Naive thymus-derived CD4-positive, alpha-beta T cell (primary cell): ENCODE measurements at regions of chr19 and their contacts with region 1.

Region 1: DNA sequence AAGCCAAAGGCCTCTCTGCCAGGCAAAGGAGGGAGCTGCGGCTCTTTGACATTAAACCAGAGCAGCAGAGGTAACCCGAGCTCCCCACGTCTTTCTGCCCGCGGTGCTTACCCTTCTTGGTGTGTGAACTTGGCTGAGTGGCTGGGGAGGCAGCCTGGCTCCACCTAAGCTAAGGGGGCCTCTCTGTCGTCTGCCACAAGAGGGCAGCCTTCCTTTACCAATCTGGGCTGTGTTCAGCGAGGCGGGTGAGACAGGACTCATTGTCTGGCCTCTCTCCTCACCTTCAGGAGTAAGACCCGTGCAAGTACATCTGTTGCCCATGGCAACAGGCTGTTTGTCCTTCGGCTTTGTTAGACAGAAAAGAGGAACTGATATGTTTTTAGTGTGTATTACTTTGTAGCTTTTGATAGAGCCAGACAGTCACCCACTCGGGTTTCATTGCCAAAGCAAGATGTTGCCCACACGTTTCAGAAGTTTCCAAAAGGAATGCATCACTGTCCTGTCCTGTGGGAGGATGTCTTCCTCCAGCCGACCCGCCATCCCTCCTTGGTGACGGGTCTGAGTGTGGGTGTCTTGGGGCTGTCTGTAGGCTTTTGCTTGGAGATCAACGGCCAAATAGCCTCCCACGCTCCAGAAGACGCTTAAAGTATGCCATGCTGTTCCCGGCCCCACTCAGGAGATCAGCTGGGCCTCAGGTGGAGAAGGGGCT is 4.6 kb downstream of the POP4 start:
- DNase-seq: peak; percentile 61 to 85 (median 79)
- ATAC-seq: peak; percentile 82
- H3K4me3 ChIP-seq: no peak overlapping the region
- H3K4me3 Mint-ChIP-seq: peak overlapping the region in 1 of 10 donors; percentile 10
- H3K27ac ChIP-seq: peak overlapping the region; percentile 35
- H3K27ac Mint-ChIP-seq: peak overlapping the region in 8 of 9 donors; percentile 6 to 77 (median 44)
- H3K4me1 ChIP-seq: peaks cover 14 to 16% of the 10 kb centered on the region in 2 donors
- H3K4me1 Mint-ChIP-seq: peaks cover 16 to 39% (median 29%) of the 10 kb centered on the region in 7 donors
- H3K27me3 ChIP-seq: no peaks in the 10 kb centered on the region
- H3K27me3 Mint-ChIP-seq: peaks cover 0 to 4% (median 0%) of the 10 kb centered on the region in 5 donors

Region 2: GRCh38 chr19:27793644-27794493 is 1816.8 kb before region 1 on chr19:
- CTCF ChIA-PET with region 1: no interaction called
- POLR2A ChIA-PET with region 1: interaction called, 12 read pairs
- intact Hi-C with region 1: loop called in 1 of 2 experiments (anchors 10 kb)
- DNase-seq: peak; percentile 79 to 92 (median 91)
- ATAC-seq: peak; percentile 98
- H3K4me3 ChIP-seq: peak overlapping the region; percentile 92
- H3K4me3 Mint-ChIP-seq: peak overlapping the region; percentile 89 to 99 (median 94)
- H3K27ac ChIP-seq: peak overlapping the region; percentile 75
- H3K27ac Mint-ChIP-seq: peak overlapping the region; percentile 89 to 96 (median 93)
- H3K4me1 ChIP-seq: peaks cover 15 to 18% of the 10 kb centered on the region in 2 donors
- H3K4me1 Mint-ChIP-seq: peaks cover 12 to 48% (median 32%) of the 10 kb centered on the region in 7 donors
- H3K27me3 ChIP-seq: no peaks in the 10 kb centered on the region
- H3K27me3 Mint-ChIP-seq: no peaks in the 10 kb centered on the region

Region 3: DNA sequence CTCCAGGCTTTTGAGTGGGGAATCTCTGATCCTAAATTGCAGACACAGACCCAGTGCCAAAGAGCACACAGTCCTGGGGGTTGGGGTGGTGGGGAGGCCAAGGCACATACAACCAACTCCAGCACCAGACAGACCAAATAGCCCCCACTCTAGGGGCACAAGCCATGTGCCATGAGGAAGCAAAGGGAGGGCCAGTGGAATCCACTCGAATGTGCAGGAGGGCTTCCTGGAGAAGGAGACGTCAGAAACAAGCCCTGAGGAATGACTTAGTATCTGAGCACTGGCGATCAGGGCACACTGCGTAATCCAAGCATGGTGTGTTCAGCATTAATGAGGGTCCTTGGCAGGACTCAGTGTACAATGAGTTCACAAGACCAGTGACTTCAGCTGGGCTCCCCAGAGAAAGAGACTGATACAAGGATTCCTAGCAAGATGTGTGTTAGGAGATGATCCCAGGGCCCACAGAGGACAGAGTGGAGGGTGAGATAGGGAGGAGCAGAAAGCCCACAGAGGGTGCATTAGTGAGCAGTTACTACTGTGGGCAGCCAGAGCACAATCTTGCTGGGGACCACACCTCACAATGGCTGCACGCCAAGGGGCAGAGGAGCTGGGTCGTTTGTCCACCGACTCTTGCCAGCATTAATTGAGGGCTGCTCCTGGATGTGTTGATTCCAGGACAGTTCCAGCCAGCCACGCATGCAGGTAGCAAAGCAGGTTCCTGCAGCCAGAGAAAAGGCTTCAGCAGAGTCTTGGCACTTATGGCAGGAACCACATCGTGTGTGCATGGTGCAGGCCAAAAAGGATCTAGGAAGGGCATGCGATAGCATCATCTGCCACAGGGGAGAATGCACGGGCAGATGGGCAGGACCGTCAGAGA is 237.6 kb before region 1 on chr19:
- CTCF ChIA-PET with region 1: no interaction called
- POLR2A ChIA-PET with region 1: no interaction called
- intact Hi-C with region 1: no loop called
- DNase-seq: no peak
- ATAC-seq: no peak
- H3K4me3 ChIP-seq: no peak overlapping the region
- H3K4me3 Mint-ChIP-seq: no peak overlapping the region
- H3K27ac ChIP-seq: no peak overlapping the region
- H3K27ac Mint-ChIP-seq: no peak overlapping the region
- H3K4me1 ChIP-seq: no peaks in the 10 kb centered on the region
- H3K4me1 Mint-ChIP-seq: no peaks in the 10 kb centered on the region
- H3K27me3 ChIP-seq: no peaks in the 10 kb centered on the region
- H3K27me3 Mint-ChIP-seq: peaks cover 0 to 54% (median 27%) of the 10 kb centered on the region in 5 donors

Region 4: DNA sequence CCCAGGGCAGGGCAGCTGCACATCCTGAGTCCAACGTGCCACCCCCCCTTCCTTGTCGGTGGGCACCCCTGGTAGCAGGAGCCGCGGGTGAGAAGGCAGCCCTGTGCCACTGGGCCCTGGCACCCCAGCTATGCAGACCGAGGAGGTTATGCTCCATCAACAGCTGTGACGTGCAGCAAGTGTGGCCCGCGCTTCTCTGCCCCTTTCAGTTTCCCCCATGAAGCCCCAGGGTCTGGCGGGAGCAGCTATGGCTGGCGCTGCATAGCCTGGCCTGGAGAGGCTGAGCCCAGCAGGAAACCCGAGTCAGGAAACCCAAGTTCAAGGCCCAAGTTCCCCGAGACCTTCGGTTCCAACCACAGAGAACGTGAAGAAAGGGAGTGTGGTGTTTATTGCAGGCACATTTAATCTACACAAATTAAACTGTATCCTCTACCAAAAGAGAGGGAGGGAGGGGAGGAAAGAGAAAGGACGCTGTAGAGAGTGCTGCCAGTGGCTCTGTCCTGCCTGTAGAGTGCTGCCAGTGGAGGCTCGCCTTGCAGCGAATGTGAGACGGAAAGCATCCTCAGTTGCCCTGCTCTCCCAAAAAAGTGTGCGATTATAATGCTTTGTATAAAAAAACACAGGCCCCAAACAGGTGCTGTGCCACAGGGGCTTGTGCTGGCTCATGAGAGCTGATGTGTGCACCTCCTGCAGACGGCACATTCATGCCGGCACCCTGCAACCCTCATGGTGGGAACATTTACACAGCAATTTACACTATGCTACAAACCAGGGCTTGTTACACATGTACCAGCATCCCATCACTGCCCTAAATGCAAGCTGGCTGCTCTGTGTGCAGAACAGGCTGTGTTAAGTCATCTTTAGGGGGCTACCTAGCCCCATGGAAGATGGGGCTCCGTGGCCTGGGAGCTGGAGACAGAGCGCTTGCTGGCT is 11.7 kb after region 1 on chr19:
- CTCF ChIA-PET with region 1: interaction called, 26 read pairs
- POLR2A ChIA-PET with region 1: interaction called, 27 read pairs
- intact Hi-C with region 1: no loop called
- DNase-seq: peak in 6 of 9 donors; percentile 4 to 32 (median 25)
- ATAC-seq: peak; percentile 70
- H3K4me3 ChIP-seq: peak overlapping the region; percentile 21
- H3K4me3 Mint-ChIP-seq: peak overlapping the region; percentile 1 to 85 (median 70)
- H3K27ac ChIP-seq: no peak overlapping the region
- H3K27ac Mint-ChIP-seq: peak overlapping the region; percentile 13 to 87 (median 76)
- H3K4me1 ChIP-seq: peaks cover 28 to 58% of the 10 kb centered on the region in 2 donors
- H3K4me1 Mint-ChIP-seq: peaks cover 37 to 53% (median 45%) of the 10 kb centered on the region in 7 donors
- H3K27me3 ChIP-seq: no peaks in the 10 kb centered on the region
- H3K27me3 Mint-ChIP-seq: peaks cover 0 to 3% (median 0%) of the 10 kb centered on the region in 5 donors

Region 5: GRCh38 chr19:29680447-29680846 is 69.7 kb after region 1 on chr19:
- CTCF ChIA-PET with region 1: interaction called, 10 read pairs
- POLR2A ChIA-PET with region 1: interaction called, 21 read pairs
- intact Hi-C with region 1: no loop called
- DNase-seq: peak; percentile 55 to 83 (median 78)
- ATAC-seq: peak; percentile 93
- H3K4me3 ChIP-seq: peak overlapping the region; percentile 56
- H3K4me3 Mint-ChIP-seq: peak overlapping the region; percentile 62 to 85 (median 77)
- H3K27ac ChIP-seq: peak overlapping the region; percentile 67
- H3K27ac Mint-ChIP-seq: peak overlapping the region; percentile 84 to 93 (median 91)
- H3K4me1 ChIP-seq: peaks cover 69 to 73% of the 10 kb centered on the region in 2 donors
- H3K4me1 Mint-ChIP-seq: peaks cover 41 to 89% (median 60%) of the 10 kb centered on the region in 7 donors
- H3K27me3 ChIP-seq: no peaks in the 10 kb centered on the region
- H3K27me3 Mint-ChIP-seq: no peaks in the 10 kb centered on the region

Region 6: DNA sequence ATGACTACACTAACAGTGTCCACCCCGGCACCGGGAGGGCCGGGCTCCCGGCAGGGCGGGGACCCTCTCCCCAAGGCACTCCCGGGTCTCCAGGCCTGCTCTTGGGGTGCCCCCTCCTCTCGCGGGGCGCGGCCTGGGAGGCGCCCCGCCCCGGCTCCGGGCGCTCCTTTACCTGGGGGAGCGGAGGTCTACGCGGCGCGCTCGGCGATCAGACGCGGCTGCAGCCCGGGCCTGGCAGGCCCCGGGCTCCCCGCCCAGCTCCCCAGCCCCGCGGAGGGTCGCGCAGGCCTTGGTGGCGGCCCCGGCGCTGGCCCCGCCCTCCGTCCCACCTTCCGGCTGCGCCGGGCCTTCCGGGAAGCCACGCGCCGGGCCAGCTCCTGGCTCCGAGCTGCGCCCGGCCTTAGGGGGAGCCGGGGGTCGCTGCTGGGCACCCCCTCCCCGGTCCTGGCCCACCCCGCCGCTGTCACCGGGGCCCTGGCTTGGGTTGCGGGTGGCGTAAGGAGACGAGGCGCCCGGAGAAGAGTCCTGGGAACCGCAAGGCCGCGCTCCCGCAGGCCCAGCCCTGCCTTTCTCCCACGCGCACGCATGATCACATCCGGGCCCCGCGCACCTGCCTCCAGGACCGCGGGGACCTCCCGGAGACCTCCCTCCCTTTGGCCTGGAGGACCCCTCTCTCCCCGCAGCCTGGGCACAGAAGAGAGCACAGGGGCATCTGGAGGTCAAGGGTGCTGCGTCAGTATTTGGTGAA is 104.4 kb after region 1 on chr19 and contains the start of gene C19orf12:
- CTCF ChIA-PET with region 1: interaction called, 97 read pairs
- POLR2A ChIA-PET with region 1: interaction called, 198 read pairs
- intact Hi-C with region 1: loop called (anchors 1 kb)
- DNase-seq: peak in 7 of 9 donors; percentile 35 to 84 (median 81)
- ATAC-seq: peak; percentile 71
- H3K4me3 ChIP-seq: peak within 1 kb of the TSS; percentile 95
- H3K4me3 Mint-ChIP-seq: peak within 1 kb of the TSS; percentile 86 to 93 (median 92)
- H3K27ac ChIP-seq: peak within 1 kb of the TSS; percentile 97
- H3K27ac Mint-ChIP-seq: peak within 1 kb of the TSS; percentile 88 to 99 (median 96)
- H3K4me1 ChIP-seq: peaks cover 50 to 59% of the 10 kb centered on the region in 2 donors
- H3K4me1 Mint-ChIP-seq: peaks cover 48 to 61% (median 59%) of the 10 kb centered on the region in 7 donors
- H3K27me3 ChIP-seq: no peaks in the 10 kb centered on the region
- H3K27me3 Mint-ChIP-seq: no peaks in the 10 kb centered on the region
- total RNA-seq, gene C19orf12: 19.8 to 51.5 (median 24.6) TPM

Region 7: DNA sequence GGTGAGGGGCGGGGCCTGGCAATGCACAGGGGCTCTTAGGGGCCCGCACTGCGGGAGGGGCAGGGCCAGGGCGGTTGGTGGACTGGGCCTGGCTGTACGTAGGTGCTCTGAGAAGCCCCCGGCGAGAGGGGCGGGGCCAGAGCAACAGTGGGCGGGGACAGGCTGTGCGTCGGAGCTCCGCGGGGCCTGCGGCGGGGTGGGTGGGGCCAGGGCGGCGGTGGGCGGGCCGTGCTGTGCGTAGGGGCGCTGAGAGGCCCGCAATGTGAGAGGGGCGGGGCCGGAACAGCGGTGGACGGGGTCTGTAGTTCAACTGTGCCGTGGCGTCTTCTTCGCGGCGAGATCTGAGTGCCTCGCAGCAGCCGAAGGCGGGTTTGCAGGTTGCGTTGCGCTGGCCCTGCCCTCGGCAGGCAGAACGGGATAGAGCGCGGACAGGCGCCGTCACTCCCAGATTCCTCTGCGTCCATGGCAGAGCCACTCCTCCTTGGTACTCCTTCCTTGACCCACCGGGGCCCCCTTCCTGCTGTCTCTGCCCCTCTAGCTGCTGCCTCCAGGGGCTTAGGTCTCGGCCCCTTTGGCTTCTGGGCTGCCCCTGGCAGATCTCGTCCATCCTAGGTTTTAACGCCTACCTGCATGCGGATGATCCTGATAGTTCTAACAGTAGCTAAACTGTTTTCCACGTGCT is 234.3 kb after region 1 on chr19:
- CTCF ChIA-PET with region 1: no interaction called
- POLR2A ChIA-PET with region 1: interaction called, 18 read pairs
- intact Hi-C with region 1: loop called (anchors 1 kb)
- DNase-seq: peak; percentile 94 to 99 (median 96)
- ATAC-seq: peak; percentile 86
- H3K4me3 ChIP-seq: peak overlapping the region; percentile 97
- H3K4me3 Mint-ChIP-seq: peak overlapping the region; percentile 87 to 98 (median 92)
- H3K27ac ChIP-seq: peak overlapping the region; percentile 92
- H3K27ac Mint-ChIP-seq: peak overlapping the region; percentile 83 to 97 (median 91)
- H3K4me1 ChIP-seq: peaks cover 9 to 17% of the 10 kb centered on the region in 2 donors
- H3K4me1 Mint-ChIP-seq: peaks cover 11 to 19% (median 14%) of the 10 kb centered on the region in 7 donors
- H3K27me3 ChIP-seq: no peaks in the 10 kb centered on the region
- H3K27me3 Mint-ChIP-seq: peaks cover 0 to 1% (median 0%) of the 10 kb centered on the region in 5 donors